Natural killer cell (primary cell): ENCODE measurements at regions of chr6 and their contacts with region 1.

Region 1: DNA sequence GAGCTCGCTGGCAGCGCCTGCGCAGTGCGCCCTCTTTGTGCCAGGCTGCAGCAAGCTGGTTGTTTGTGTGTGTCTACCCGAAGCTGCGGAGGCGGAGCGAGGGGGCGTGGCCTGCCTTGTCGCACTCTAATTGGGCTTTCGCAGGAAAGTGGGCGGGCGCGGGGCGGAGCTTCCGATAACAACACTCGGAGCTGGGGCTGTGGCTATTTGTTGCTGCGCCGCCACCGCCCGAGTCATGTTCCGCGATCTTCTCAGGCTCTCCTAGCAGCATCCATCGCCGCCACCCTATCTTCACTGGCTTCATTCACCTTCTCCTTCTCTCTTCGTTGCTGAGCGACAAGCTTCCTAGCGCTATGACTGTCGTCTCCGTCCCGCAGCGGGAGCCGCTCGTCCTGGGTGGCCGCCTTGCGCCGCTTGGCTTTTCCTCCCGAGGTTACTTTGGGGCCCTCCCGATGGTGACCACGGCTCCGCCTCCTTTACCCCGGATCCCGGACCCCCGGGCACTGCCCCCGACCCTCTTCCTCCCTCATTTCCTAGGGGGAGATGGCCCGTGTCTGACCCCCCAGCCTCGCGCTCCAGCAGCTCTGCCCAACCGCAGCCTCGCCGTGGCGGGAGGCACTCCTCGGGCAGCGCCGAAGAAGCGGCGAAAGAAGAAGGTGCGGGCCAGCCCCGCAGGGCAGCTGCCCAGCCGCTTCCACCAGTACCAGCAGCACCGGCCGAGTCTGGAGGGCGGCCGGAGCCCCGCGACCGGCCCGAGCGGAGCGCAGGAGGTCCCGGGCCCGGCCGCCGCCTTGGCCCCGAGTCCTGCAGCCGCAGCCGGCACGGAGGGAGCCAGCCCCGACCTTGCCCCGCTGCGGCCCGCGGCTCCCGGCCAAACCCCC is at the start of gene PNRC1:
- DNase-seq: peak; percentile 100
- ATAC-seq: peak; percentile 73 to 89 (median 74)
- H3K4me3 ChIP-seq: peak within 1 kb of the TSS; percentile 75
- H3K4me3 Mint-ChIP-seq: peak within 1 kb of the TSS; percentile 99
- H3K27ac ChIP-seq: peak within 1 kb of the TSS; percentile 97
- H3K27ac Mint-ChIP-seq: peak within 1 kb of the TSS; percentile 99
- H3K4me1 ChIP-seq: peaks cover 26% of the 10 kb centered on the region
- H3K4me1 Mint-ChIP-seq: peaks cover 53 to 59% of the 10 kb centered on the region in 2 donors
- H3K27me3 ChIP-seq: no peaks in the 10 kb centered on the region
- H3K27me3 Mint-ChIP-seq: no peaks in the 10 kb centered on the region
- CTCF ChIP-seq: no peak
- total RNA-seq, gene PNRC1: 695 to 970 (median 712) TPM

Region 2: GRCh38 chr6:87154993-87155841 is 1925.6 kb before region 1 on chr6 and contains the start of gene ZNF292:
- intact Hi-C with region 1: loop called (anchors 5 kb)
- DNase-seq: peak; percentile 88 to 97
- ATAC-seq: peak; percentile 66 to 88 (median 80)
- H3K4me3 ChIP-seq: peak within 1 kb of the TSS; percentile 85
- H3K4me3 Mint-ChIP-seq: peak within 1 kb of the TSS; percentile 91
- H3K27ac ChIP-seq: peak within 1 kb of the TSS; percentile 96
- H3K27ac Mint-ChIP-seq: peak within 1 kb of the TSS; percentile 97 to 99
- H3K4me1 ChIP-seq: peaks cover 30% of the 10 kb centered on the region
- H3K4me1 Mint-ChIP-seq: peaks cover 52 to 53% of the 10 kb centered on the region in 2 donors
- H3K27me3 ChIP-seq: no peaks in the 10 kb centered on the region
- H3K27me3 Mint-ChIP-seq: no peaks in the 10 kb centered on the region
- CTCF ChIP-seq: no peak
- total RNA-seq, gene ZNF292: 78.7 to 90.4 (median 89.4) TPM

Region 3: DNA sequence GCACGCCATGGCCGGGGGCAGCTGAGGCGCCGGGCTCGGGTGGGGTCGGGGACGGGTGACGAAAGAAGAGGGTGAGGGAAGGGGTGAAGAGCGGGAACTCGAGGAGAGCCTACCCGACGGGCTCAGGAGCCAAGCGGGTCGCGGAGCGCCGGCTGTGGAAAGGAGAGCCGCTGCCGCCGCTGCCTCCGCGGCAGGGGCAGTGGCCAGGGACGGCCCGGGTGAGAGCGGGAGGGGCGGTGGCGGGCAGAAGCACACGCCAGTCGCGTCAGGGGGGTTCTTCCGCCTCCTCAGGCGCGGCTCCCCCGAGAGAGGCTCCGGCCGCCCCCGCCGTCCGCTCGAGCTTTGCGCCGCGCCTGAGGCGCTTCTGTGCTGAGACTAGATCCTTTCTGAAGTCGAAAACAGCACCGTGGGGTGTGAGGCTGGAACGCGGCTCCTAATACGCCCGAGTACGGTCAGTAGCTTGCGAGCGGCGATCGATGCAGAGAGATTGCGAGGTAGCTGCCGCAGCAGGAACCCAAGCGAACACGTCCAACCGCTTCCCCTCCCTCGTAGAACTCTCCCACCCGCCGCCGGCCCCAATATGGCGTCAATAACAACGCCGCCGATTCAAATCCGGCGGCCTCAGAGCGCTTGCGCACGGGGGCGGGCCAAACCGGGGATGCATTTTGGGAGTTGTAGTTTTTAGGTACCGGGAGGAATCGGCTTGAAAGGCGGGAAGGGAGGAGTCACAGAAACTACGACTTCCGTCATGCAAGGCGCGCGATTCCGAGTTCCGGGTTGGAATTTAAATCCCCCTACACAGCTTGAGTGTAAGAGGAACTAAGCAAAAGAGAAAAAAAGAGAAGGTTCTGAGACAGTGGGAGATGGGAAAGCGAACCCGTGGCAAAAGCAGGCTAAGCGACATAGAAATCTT is 1378.8 kb before region 1 on chr6 and contains the start of gene AKIRIN2:
- intact Hi-C with region 1: loop called (anchors 5 kb)
- DNase-seq: peak; percentile 97 to 99
- ATAC-seq: peak; percentile 78 to 92 (median 83)
- H3K4me3 ChIP-seq: peak within 1 kb of the TSS; percentile 87
- H3K4me3 Mint-ChIP-seq: peak within 1 kb of the TSS; percentile 99
- H3K27ac ChIP-seq: peak within 1 kb of the TSS; percentile 97
- H3K27ac Mint-ChIP-seq: peak within 1 kb of the TSS; percentile 94 to 98
- H3K4me1 ChIP-seq: no peaks in the 10 kb centered on the region
- H3K4me1 Mint-ChIP-seq: peaks cover 51 to 54% of the 10 kb centered on the region in 2 donors
- H3K27me3 ChIP-seq: no peaks in the 10 kb centered on the region
- H3K27me3 Mint-ChIP-seq: no peaks in the 10 kb centered on the region
- CTCF ChIP-seq: no peak
- total RNA-seq, gene AKIRIN2: 102 to 156 (median 108) TPM

Region 4: GRCh38 chr6:89117211-89118108 is 36.7 kb after region 1 on chr6 and contains the start of gene SRSF12:
- intact Hi-C with region 1: loop called (anchors 5 kb)
- DNase-seq: peak; percentile 46 to 59
- ATAC-seq: peak; percentile 89 to 95 (median 93)
- H3K4me3 ChIP-seq: peak within 1 kb of the TSS; percentile 37
- H3K4me3 Mint-ChIP-seq: peak within 1 kb of the TSS; percentile 93
- H3K27ac ChIP-seq: no peak within 1 kb of the TSS
- H3K27ac Mint-ChIP-seq: peak within 1 kb of the TSS; percentile 54 to 78
- H3K4me1 ChIP-seq: peaks cover 9% of the 10 kb centered on the region
- H3K4me1 Mint-ChIP-seq: peaks cover 6 to 15% of the 10 kb centered on the region in 2 donors
- H3K27me3 ChIP-seq: no peaks in the 10 kb centered on the region
- H3K27me3 Mint-ChIP-seq: no peaks in the 10 kb centered on the region
- CTCF ChIP-seq: no peak
- total RNA-seq, gene SRSF12: 0.07 to 0.45 (median 0.45) TPM

Region 5: DNA sequence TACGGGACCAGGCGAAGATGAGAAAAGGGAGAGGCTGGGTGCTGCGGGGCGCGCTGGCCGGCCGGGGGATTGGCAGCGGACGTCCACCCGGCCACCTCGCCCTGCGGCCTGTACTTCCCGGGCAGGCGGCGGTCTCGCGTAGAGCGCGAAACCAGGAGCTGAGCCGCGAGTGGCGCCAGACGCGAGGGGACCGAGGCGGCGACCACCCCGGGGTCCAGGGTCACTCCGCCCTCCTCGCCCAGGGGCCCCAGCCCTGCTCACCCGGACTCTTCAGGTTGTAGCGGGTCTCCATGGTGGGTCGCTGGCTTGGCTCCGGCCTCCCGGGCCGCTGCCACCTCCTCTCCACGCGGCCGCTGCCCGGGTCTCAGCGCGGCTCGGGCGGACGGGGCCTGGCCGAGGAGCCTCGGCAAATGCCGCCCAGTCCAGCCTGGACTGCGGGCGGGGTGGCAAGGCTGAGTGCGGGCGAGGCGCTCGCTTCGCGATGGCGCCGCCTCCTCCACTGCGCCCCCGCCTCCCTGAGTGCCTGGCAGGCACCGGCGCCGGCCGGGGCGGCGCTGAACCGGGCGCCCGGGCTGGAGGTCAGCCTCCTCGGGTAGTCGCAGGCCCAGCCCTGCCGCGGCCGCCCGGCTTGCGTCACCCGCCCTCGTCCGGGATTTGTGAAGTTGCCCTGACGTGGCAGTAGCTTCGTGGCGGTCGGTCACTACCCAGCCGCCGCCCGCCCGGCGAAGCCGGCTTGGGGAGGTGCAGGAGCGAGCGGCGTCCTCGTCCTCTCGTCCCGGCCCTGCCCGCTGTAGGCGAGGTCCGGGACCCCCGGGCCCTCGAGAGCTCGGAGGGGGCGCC is 271.7 kb after region 1 on chr6 and contains the start of gene UBE2J1:
- intact Hi-C with region 1: loop called (anchors 2 kb)
- DNase-seq: peak; percentile 80 to 82
- ATAC-seq: peak; percentile 88 to 95 (median 92)
- H3K4me3 ChIP-seq: peak within 1 kb of the TSS; percentile 66
- H3K4me3 Mint-ChIP-seq: peak within 1 kb of the TSS; percentile 100
- H3K27ac ChIP-seq: peak within 1 kb of the TSS; percentile 92
- H3K27ac Mint-ChIP-seq: peak within 1 kb of the TSS; percentile 96
- H3K4me1 ChIP-seq: peaks cover 19% of the 10 kb centered on the region
- H3K4me1 Mint-ChIP-seq: peaks cover 55 to 63% of the 10 kb centered on the region in 2 donors
- H3K27me3 ChIP-seq: no peaks in the 10 kb centered on the region
- H3K27me3 Mint-ChIP-seq: no peaks in the 10 kb centered on the region
- CTCF ChIP-seq: no peak
- total RNA-seq, gene UBE2J1: 34.1 to 58.1 (median 45.9) TPM